ENCODE measurements at regions of chr9 and their contacts with region 1.

Region 1: DNA sequence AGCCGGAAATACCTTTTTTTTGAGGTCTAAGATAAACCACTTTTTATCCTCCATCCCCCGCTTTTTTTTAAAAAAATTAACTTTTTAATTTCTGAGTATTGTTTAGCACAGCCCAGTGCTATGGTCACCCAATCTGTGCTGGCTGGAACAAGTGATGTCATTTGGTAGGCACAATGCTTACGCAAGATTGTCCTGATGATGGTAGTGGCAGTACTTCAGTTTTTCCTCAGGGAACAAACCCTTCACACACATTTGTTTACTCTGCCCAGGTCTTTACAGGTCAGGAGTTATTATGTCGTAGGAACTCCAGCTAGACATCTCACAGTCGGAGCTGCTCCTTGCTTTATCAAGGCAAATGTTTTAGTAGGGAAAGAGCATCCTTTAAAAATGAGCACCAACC is 20.6 kb upstream of the PTCH1 start:
- DNase-seq: no peak
- ATAC-seq: no peak
- H3K4me3 ChIP-seq: no peak overlapping the region
- H3K27ac ChIP-seq: no peak overlapping the region
- H3K4me1 ChIP-seq: no peaks in the 10 kb centered on the region
- H3K27me3 ChIP-seq: peaks cover 12 to 21% of the 10 kb centered on the region in 2 experiments
- CTCF ChIP-seq: no peak
- EP300 ChIP-seq: no peak
- POLR2A ChIP-seq: no peak
- RAD21 ChIP-seq: no peak

Region 2: GRCh38 chr9:95715868-95716435 is 178.6 kb after region 1 on chr9:
- CTCF ChIA-PET with region 1: interaction called, 10 read pairs
- POLR2A ChIA-PET with region 1: no interaction called
- in situ Hi-C with region 1: no loop called
- intact Hi-C with region 1: no loop called
- DNase-seq: no peak
- ATAC-seq: no peak
- H3K4me3 ChIP-seq: no peak overlapping the region
- H3K27ac ChIP-seq: no peak overlapping the region
- H3K4me1 ChIP-seq: no peaks in the 10 kb centered on the region
- H3K27me3 ChIP-seq: peaks cover 7 to 17% of the 10 kb centered on the region in 2 experiments; a peak in 4 of 5 replicates
- CTCF ChIP-seq: no peak
- EP300 ChIP-seq: no peak
- POLR2A ChIP-seq: no peak
- RAD21 ChIP-seq: no peak

Measured in K562 (cell line).